Vagina (tissue), 2 donors: ENCODE measurements at regions of chr2 and their contacts with region 1.

Region 1: GRCh38 chr2:173210270-173211196 is 134.9 kb downstream of the MAP3K20 start:
- DNase-seq: no peak
- H3K4me3 ChIP-seq: no peak overlapping the region
- H3K27ac ChIP-seq: peak overlapping the region; percentile 89
- H3K4me1 ChIP-seq: peaks cover 14% of the 10 kb centered on the region
- H3K27me3 ChIP-seq: no peaks in the 10 kb centered on the region
- CTCF ChIP-seq: peak; percentile 60 to 95 (median 84)
- POLR2A ChIP-seq: no peak

Region 2: GRCh38 chr2:173033084-173033483 is 177.4 kb before region 1 on chr2:
- intact Hi-C with region 1: loop called (anchors 5 kb)
- DNase-seq: no peak
- H3K4me3 ChIP-seq: no peak overlapping the region
- H3K27ac ChIP-seq: no peak overlapping the region
- H3K4me1 ChIP-seq: peaks cover 3% of the 10 kb centered on the region
- H3K27me3 ChIP-seq: no peaks in the 10 kb centered on the region
- CTCF ChIP-seq: no peak
- POLR2A ChIP-seq: no peak

Region 3: DNA sequence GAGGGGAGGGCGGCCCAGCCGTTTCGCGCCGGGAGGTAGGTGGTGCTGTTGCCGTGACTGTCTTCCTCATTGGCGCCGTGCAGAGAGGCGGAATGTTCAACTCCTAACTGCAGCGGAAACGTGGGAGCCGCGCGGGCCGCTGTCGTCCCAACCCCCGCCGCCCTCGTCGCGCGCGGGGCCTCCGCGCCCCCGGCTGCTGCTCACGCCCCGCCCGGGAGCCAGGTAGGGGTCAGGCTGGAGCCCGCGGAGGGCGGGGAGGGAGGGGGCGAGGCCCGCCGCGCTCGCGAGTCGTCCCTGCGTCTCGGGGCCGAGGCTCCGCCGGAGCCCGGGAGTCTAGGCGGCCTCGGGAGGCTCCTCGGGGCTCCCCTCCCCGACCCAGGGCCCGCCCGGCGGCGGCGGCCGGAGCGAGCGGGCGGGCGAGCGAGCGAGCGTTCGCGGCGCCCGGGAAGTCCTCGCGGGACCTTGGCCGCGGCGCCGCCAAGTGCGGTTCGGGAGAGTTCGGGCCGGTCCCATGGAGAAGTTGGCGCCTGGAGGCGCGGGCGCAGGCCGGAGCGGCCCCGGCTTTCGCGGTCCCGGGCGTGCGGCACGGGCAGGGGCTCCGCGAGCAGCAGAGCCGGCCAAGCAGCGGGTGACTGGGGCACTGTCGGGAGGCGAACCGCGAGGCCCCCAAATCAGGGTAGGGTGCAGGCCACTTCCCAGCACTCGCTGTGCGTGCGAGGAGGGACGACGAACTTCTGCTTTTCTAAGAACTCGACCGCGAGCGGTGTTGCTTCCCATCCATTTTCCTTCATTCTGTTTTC is 134.6 kb before region 1 on chr2 and contains the start of gene MAP3K20:
- intact Hi-C with region 1: loop called (anchors 1 kb)
- DNase-seq: no peak
- H3K4me3 ChIP-seq: peak within 1 kb of the TSS; percentile 77 to 83
- H3K27ac ChIP-seq: peak within 1 kb of the TSS; percentile 99
- H3K4me1 ChIP-seq: peaks cover 29% of the 10 kb centered on the region
- H3K27me3 ChIP-seq: no peaks in the 10 kb centered on the region
- CTCF ChIP-seq: peak in 1 of 3 experiments; percentile 64
- POLR2A ChIP-seq: peak in 1 of 2 donors; percentile 67
- total RNA-seq, gene MAP3K20: 59.4 TPM